Adrenal gland (tissue), 19 donors: ENCODE measurements at regions of chr12 and their contacts with region 1.

Region 1: GRCh38 chr12:26028953-26029735 is 70.7 kb downstream of the RASSF8 start:
- DNase-seq: peak in 3 of 7 donors; percentile 46 to 63 (median 50)
- H3K4me3 ChIP-seq: no peak overlapping the region
- H3K27ac ChIP-seq: peak overlapping the region in 1 of 5 donors; percentile 11
- H3K4me1 ChIP-seq: peaks cover 0 to 27% of the 10 kb centered on the region in 2 donors
- H3K27me3 ChIP-seq: no peaks in the 10 kb centered on the region
- CTCF ChIP-seq: peak; percentile 69 to 91 (median 81)
- POLR2A ChIP-seq: no peak

Region 2: DNA sequence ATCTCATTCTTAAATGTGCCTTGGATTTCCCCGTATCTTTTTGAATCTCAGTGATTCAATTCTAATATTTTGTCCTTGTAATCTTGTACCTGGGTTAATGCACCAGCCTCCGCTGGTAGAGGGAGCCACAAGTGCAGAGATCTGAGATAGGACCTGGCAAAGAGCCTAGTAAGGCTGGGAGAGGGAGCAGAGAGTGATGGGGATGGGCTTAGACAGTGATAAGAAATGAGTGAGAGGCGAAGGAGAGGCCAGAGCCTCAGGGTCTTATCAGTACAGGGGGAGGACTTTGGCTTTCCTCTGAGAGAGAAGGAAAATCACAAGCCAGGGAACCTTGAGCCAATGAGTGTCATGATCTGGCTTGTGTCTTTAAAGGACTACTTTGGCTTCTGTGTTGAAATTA is 445.6 kb before region 1 on chr12:
- intact Hi-C with region 1: loop called in 1 of 2 experiments (anchors 10 kb)
- DNase-seq: peak; percentile 61 to 85 (median 76)
- H3K4me3 ChIP-seq: no peak overlapping the region
- H3K27ac ChIP-seq: peak overlapping the region in 2 of 5 donors; percentile 13 to 34
- H3K4me1 ChIP-seq: peaks cover 9 to 24% of the 10 kb centered on the region in 2 donors
- H3K27me3 ChIP-seq: no peaks in the 10 kb centered on the region
- CTCF ChIP-seq: peak in 5 of 6 experiments; percentile 29 to 50 (median 42)
- POLR2A ChIP-seq: no peak

Region 3: GRCh38 chr12:25677232-25677937 is 351.8 kb before region 1 on chr12:
- intact Hi-C with region 1: loop called in 1 of 2 experiments (anchors 10 kb)
- DNase-seq: peak in 3 of 7 donors; percentile 20 to 44 (median 26)
- H3K4me3 ChIP-seq: no peak overlapping the region
- H3K27ac ChIP-seq: no peak overlapping the region
- H3K4me1 ChIP-seq: peaks cover 0 to 5% of the 10 kb centered on the region in 2 donors
- H3K27me3 ChIP-seq: no peaks in the 10 kb centered on the region
- CTCF ChIP-seq: peak in 3 of 6 experiments; percentile 30 to 55 (median 50)
- POLR2A ChIP-seq: no peak

Region 4: GRCh38 chr12:26360062-26360461 is 330.9 kb after region 1 on chr12:
- intact Hi-C with region 1: no loop called
- DNase-seq: peak in 2 of 7 donors; percentile 24 to 27
- H3K4me3 ChIP-seq: no peak overlapping the region
- H3K27ac ChIP-seq: no peak overlapping the region
- H3K4me1 ChIP-seq: no peaks in the 10 kb centered on the region
- H3K27me3 ChIP-seq: no peaks in the 10 kb centered on the region
- CTCF ChIP-seq: no peak
- POLR2A ChIP-seq: no peak